Activated CD8-positive, alpha-beta T cell treated with anti-CD3 and anti-CD28 coated beads for 36 hours (primary cell): ENCODE measurements at regions of chr1 and their contacts with region 1.

Region 1: DNA sequence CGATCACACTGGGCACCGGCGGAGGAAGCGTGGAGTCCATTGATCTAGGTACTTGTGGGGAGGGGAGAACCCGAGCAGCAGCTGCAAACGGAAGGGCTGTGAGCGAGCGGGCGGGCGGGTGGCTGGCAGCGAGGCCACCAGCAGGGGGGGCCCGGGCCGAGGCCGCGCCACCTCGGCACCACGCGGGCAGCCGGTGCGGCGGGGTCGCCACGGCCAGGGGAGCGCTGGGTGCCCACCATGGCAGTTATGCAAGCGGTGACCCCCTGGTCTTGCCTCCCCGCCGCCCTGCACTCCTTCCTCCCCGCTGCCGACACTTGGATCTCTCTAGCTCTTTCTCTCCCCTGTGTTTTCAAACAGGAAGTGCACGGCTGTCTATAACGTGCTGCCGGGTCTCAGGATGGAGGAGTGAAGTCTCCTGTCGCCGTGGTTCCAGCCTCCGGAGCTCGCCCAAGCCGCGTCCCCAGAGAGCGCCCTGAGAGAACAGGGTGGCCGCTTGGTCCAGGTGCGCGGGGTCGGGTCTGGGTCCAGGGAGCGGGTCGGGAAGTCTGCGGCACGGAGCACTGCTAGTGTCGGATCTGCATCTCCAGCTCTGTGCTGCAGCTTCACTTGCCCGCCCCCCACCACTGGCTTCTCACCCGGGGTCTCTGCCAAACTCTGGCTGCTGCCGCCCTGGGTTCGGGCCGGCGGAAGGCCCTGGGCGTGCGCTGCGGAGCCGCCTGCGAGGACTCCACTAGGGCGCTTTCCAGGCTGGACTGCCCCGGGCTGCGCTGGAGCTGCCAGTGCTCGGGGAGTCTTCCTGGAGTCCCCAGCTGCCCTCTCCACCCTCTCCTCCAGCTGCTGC is 22.7 kb downstream of the LRRC8D start:
- DNase-seq: peak; percentile 87
- ATAC-seq: peak; percentile 84
- H3K4me3 Mint-ChIP-seq: peak overlapping the region; percentile 88
- H3K27ac Mint-ChIP-seq: peak overlapping the region; percentile 96
- H3K4me1 Mint-ChIP-seq: peaks cover 54% of the 10 kb centered on the region
- H3K27me3 Mint-ChIP-seq: no peaks in the 10 kb centered on the region
- CTCF ChIP-seq: peak; percentile 88

Region 2: DNA sequence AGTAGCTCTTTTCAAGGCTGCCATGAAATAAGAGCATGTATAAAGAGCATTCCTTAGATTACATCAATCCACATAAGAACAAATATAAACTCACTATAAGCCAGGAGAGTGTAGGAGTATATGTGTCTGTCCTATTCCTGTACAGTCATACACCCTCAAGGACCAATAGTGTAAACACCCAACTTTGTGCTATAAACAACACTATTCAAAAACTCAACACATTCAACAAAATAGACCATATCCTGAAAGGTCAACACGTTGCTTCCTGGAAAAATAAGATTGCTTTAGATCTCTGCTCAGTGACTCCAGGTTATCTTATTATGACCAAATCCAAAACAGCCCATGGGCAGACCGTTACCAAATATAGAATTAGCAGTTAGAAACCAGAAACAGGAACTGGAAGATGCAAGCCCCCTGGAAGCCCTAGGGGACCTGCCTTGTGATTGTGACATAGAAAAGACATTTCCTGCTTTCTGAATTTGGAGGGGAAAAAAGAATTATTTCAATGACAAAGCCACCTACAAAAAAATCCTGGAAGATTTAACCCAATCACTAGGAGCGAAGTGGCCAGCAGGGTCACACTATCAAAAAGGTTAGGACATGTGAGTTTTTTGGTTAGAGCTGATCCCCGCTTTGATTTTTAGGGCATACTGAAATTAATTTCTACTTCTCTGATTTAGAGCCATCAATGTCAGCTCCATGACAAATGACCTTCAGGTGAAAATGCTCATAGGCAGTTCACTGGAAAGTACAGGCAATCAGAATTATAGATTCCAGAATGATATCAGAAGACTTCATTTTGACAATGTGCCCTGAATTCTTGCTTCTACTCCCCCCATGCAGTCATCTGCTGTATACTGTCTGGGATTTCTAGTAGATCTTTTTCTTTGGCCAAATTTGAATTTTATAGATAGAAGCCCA is 150.6 kb before region 1 on chr1:
- CTCF ChIA-PET with region 1: no interaction called
- POLR2A ChIA-PET with region 1: no interaction called
- intact Hi-C with region 1: loop called (anchors 10 kb)
- DNase-seq: peak; percentile 41
- ATAC-seq: peak; percentile 47
- H3K4me3 Mint-ChIP-seq: peak overlapping the region; percentile 3
- H3K27ac Mint-ChIP-seq: peak overlapping the region; percentile 84
- H3K4me1 Mint-ChIP-seq: peaks cover 83% of the 10 kb centered on the region
- H3K27me3 Mint-ChIP-seq: no peaks in the 10 kb centered on the region
- CTCF ChIP-seq: no peak

Region 3: DNA sequence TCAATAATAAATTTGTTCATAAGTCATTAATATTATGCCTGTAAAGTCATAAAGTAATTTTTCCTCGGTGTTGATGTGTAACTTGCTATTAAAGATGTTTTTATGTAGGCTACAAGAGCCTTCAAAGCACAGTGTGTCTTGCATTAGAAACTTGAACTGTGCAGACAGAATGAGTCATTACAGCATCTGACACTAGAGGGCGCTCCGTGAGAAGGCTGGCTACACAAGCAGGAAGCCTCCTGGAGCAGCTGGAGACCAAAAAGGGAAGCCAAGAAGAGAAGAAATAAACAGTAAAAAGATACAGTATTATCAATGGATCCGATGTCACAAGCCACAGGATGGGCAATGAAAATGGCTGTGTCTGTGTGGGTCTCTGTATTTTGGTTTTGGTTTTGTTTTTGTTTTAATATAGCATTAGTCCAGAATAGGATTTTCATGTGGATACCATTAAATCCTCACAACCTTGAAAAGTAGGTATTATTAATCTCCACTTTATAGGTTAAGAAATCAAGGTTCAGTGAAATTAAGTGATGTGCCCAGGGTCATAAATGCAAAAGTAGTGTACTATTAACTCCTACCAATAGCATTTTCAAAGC is 38.8 kb before region 1 on chr1:
- CTCF ChIA-PET with region 1: interaction called, 17 read pairs
- POLR2A ChIA-PET with region 1: no interaction called
- intact Hi-C with region 1: no loop called
- DNase-seq: peak; percentile 94
- ATAC-seq: peak; percentile 95
- H3K4me3 Mint-ChIP-seq: no peak overlapping the region
- H3K27ac Mint-ChIP-seq: no peak overlapping the region
- H3K4me1 Mint-ChIP-seq: peaks cover 5% of the 10 kb centered on the region
- H3K27me3 Mint-ChIP-seq: peaks cover 2% of the 10 kb centered on the region
- CTCF ChIP-seq: peak; percentile 98

Region 4: GRCh38 chr1:89833183-89834082 is 10.1 kb before region 1 on chr1:
- CTCF ChIA-PET with region 1: interaction called, 7 read pairs
- POLR2A ChIA-PET with region 1: interaction called, 17 read pairs
- intact Hi-C with region 1: no loop called
- DNase-seq: no peak
- ATAC-seq: no peak
- H3K4me3 Mint-ChIP-seq: no peak overlapping the region
- H3K27ac Mint-ChIP-seq: no peak overlapping the region
- H3K4me1 Mint-ChIP-seq: peaks cover 16% of the 10 kb centered on the region
- H3K27me3 Mint-ChIP-seq: no peaks in the 10 kb centered on the region
- CTCF ChIP-seq: no peak

Region 5: DNA sequence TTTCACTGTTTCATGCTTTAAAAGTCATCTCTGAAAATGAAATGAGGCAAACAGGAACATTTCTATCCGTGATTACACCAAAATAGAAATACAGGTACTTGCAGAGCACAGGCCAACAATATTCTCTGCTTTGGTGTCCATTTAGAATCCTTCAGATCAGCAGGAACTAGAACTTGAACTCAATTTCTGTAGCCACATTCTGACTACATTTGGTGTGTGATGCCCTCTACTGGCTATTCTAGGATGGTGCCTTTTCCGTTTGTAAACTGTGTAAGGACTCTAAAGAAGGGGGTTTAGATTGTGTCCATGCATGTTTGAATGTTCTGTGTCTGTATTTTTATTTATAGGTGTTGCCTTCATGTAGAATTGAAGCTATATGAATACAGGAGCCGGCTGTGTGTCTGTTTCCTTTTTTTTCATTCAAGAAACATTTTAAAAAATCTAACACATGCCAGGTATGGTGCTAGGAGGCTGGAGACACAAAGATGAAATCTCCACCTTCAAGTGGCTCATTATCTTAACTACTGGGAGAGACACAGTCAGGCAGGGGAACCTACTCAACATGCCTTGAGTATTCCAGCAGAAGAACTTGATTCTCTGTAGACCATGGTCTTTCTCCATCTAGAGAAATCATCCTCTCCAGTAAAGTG is 143.8 kb after region 1 on chr1:
- CTCF ChIA-PET with region 1: interaction called, 10 read pairs
- POLR2A ChIA-PET with region 1: interaction called, 4 read pairs
- intact Hi-C with region 1: no loop called
- DNase-seq: peak; percentile 65
- ATAC-seq: peak; percentile 93
- H3K4me3 Mint-ChIP-seq: no peak overlapping the region
- H3K27ac Mint-ChIP-seq: no peak overlapping the region
- H3K4me1 Mint-ChIP-seq: peaks cover 10% of the 10 kb centered on the region
- H3K27me3 Mint-ChIP-seq: peaks cover 4% of the 10 kb centered on the region
- CTCF ChIP-seq: peak; percentile 83